K562 (cell line): ENCODE measurements at regions of chr22 and their contacts with region 1.

Region 1: GRCh38 chr22:19479357-19480172 is at the start of gene CDC45:
- DNase-seq: peak; percentile 100
- ATAC-seq: peak; percentile 93
- H3K4me3 ChIP-seq: peak within 1 kb of the TSS; percentile 70
- H3K27ac ChIP-seq: peak within 1 kb of the TSS; percentile 97
- H3K4me1 ChIP-seq: peaks cover 7 to 16% of the 10 kb centered on the region in 2 experiments
- H3K27me3 ChIP-seq: no peaks in the 10 kb centered on the region
- CTCF ChIP-seq: 0 out of 6 replicates have a peak, but pooled peaks of 2 of the 3 experiments have one; percentile 9 to 11
- EP300 ChIP-seq: peak; percentile 35
- POLR2A ChIP-seq: no peak
- RAD21 ChIP-seq: peak in 1 of 2 experiments; percentile 42; a peak in 2 of 4 replicates
- polyA plus RNA-seq, gene CDC45: 276 to 465 TPM

Region 2: GRCh38 chr22:19122143-19122751 is 357.3 kb before region 1 on chr22 and contains the start of gene DGCR2:
- CTCF ChIA-PET with region 1: no interaction called
- POLR2A ChIA-PET with region 1: interaction called, 4 read pairs
- in situ Hi-C with region 1: no loop called
- intact Hi-C with region 1: loop called (anchors 5 kb)
- DNase-seq: peak; percentile 100
- ATAC-seq: peak; percentile 96
- H3K4me3 ChIP-seq: peak within 1 kb of the TSS; percentile 77
- H3K27ac ChIP-seq: peak within 1 kb of the TSS; percentile 77
- H3K4me1 ChIP-seq: peaks cover 30 to 52% of the 10 kb centered on the region in 2 experiments
- H3K27me3 ChIP-seq: peaks cover 18 to 26% of the 10 kb centered on the region in 2 experiments; a peak in 4 of 5 replicates
- CTCF ChIP-seq: no peak; a peak in 1 of 6 replicates
- EP300 ChIP-seq: 0 out of 2 replicates have a peak, but pooled peaks have one; percentile 3
- POLR2A ChIP-seq: peak; percentile 98
- RAD21 ChIP-seq: no peak
- polyA plus RNA-seq, gene DGCR2: 0.69 to 0.70 TPM

Region 3: DNA sequence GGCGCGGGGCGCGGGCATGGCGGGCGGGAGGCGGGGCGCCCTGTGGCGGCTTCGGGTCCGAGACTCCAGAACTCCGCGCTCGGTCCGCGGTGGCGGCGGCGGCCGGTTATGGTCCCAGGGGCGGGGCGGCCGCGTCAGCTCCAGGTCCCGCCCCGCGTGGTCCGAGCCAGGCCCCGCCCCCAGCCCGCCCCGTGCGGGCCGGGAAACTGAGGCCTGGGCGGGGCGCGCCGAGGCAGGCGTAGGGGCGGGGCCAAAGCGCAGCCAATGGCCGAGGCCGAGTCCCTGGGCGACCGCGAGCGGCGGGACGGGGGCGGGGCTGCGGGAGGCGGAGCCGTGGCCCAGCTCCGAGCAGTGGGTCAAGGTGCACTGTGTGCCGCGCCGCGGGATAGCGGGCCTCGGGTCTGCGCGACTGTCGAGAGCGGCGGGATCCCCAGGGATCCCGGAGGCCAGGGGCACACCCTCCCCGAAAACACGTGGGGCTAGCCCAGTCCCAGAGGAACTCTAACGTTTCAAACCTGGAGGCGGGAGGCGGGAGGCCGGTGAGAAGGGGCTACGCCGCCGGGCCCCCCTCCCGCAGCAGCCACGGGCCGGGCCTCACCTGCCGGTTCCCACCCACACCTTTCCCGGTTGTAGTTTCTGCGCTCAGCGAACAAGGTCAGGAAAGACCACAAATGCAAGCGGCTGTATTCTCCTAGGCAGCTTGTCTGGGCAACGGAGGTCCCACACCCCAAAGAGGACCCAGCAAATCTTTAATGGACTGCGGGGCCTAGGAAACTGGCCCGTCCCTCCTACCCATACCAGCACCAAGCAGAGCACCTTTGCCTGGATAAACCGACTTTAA is 300.7 kb before region 1 on chr22 and contains the start of gene SLC25A1:
- CTCF ChIA-PET with region 1: interaction called, 14 read pairs
- POLR2A ChIA-PET with region 1: interaction called, 22 read pairs
- in situ Hi-C with region 1: no loop called
- intact Hi-C with region 1: loop called (anchors 1 kb)
- DNase-seq: peak; percentile 100
- ATAC-seq: peak; percentile 86
- H3K4me3 ChIP-seq: peak within 1 kb of the TSS; percentile 76
- H3K27ac ChIP-seq: peak within 1 kb of the TSS; percentile 85
- H3K4me1 ChIP-seq: peaks cover 31 to 89% of the 10 kb centered on the region in 2 experiments
- H3K27me3 ChIP-seq: peaks cover 10 to 22% of the 10 kb centered on the region in 2 experiments; a peak in 4 of 5 replicates
- CTCF ChIP-seq: no peak
- EP300 ChIP-seq: no peak
- POLR2A ChIP-seq: no peak
- RAD21 ChIP-seq: no peak
- polyA plus RNA-seq, gene SLC25A1: 11.0 to 23.7 TPM

Region 4: DNA sequence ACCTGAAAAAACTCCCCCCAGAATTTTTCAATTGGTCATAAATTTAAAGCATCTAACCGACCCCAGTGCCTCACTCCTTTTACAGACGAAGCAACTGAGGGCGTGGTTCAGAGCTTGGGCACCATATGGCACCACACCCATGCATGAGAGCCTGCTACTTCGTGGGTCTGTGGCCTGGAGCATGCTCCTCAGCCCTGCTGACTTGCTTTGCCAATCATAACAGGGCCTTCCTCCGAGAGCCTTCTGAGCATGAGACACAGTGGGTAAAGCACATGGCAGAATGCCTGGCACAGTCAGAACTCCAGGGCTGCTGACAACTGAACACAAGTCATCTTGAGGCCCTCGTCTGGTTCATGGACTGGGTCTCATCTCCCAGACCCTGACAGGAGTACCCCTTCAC is 81.4 kb before region 1 on chr22:
- CTCF ChIA-PET with region 1: no interaction called
- POLR2A ChIA-PET with region 1: interaction called, 14 read pairs
- in situ Hi-C with region 1: no loop called
- intact Hi-C with region 1: loop called (anchors 5 kb)
- DNase-seq: no peak
- ATAC-seq: no peak
- H3K4me3 ChIP-seq: no peak overlapping the region
- H3K27ac ChIP-seq: peak overlapping the region; percentile 73
- H3K4me1 ChIP-seq: peaks cover 31 to 33% of the 10 kb centered on the region in 2 experiments
- H3K27me3 ChIP-seq: no peaks in the 10 kb centered on the region
- CTCF ChIP-seq: no peak
- EP300 ChIP-seq: no peak
- POLR2A ChIP-seq: no peak
- RAD21 ChIP-seq: no peak; a peak in 1 of 4 replicates

Region 5: DNA sequence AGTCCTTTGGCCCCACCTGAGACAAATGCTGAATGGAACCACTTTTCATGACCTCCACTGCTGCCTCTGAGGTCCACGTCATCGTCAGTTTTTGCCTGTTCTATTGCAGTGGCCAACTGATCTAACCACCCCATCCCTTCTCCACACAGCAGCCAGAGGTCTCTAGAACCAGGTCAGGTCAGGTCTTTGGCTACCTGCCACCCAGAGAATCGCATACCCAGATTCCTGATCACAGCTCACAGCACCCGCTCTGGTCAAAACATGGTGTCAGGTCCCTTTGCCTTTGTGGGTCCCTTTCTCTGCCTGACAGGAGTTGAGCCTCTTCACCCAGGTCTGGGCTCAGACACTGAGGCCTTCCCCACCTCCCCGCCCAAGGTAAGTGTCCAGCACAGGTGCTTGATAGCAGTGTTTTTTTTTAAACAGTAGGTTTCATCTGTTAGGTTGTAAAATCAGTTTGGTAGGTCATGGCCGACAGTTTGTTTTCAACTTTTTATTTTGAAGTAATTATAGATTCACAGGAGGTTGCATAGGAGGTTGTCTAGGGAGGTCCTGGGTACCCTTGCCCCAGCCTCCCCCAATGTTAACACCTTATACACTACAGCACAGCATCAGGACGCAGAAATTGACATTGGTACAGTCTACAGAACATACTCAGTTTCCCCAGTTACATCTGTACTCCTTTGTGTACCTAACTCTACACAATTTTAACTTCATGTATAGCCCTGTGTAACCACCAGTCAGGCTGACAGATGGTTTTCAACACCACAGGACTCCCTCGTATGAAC is 39.0 kb before region 1 on chr22:
- CTCF ChIA-PET with region 1: no interaction called
- POLR2A ChIA-PET with region 1: interaction called, 16 read pairs
- in situ Hi-C with region 1: no loop called
- intact Hi-C with region 1: no loop called
- DNase-seq: peak in 1 of 4 experiments; percentile 49
- ATAC-seq: peak; percentile 7
- H3K4me3 ChIP-seq: no peak overlapping the region
- H3K27ac ChIP-seq: no peak overlapping the region
- H3K4me1 ChIP-seq: peaks cover 7 to 9% of the 10 kb centered on the region in 2 experiments; a peak in 4 of 5 replicates
- H3K27me3 ChIP-seq: no peaks in the 10 kb centered on the region
- CTCF ChIP-seq: no peak
- EP300 ChIP-seq: no peak
- POLR2A ChIP-seq: peak; percentile 34; the same call in 1 of the 2 replicates
- RAD21 ChIP-seq: no peak

Region 6: GRCh38 chr22:19463496-19464469 is 15.8 kb before region 1 on chr22:
- CTCF ChIA-PET with region 1: no interaction called
- POLR2A ChIA-PET with region 1: interaction called, 148 read pairs
- in situ Hi-C with region 1: no loop called
- intact Hi-C with region 1: no loop called
- DNase-seq: peak in 1 of 4 experiments; percentile 50
- ATAC-seq: peak; percentile 21
- H3K4me3 ChIP-seq: no peak overlapping the region
- H3K27ac ChIP-seq: no peak overlapping the region
- H3K4me1 ChIP-seq: no peaks in the 10 kb centered on the region
- H3K27me3 ChIP-seq: no peaks in the 10 kb centered on the region
- CTCF ChIP-seq: no peak
- EP300 ChIP-seq: no peak
- POLR2A ChIP-seq: no peak; the same call in 1 of the 2 replicates
- RAD21 ChIP-seq: 0 out of 4 replicates have a peak, but pooled peaks of 1 of the 2 experiments have one; percentile 13

Region 7: DNA sequence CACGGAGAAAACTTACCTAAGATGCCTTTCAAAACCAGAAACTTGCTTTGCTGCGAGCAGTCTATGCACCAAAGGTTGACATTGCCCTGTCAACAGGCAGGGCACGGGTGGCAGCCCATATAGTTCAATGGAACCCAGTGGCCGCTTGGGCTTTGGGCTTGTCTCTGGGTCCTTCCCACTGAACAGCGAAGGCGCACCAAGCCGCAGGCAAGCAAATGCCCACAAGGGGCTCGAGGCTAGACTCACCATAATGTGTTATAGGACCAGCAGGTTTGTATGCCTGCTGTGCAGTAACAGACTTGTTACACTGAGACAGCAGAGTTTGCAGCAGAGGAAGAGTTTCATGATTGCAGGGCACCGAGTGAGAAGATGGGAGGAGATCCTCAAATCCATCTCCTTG is 24.3 kb after region 1 on chr22:
- CTCF ChIA-PET with region 1: no interaction called
- POLR2A ChIA-PET with region 1: interaction called, 25 read pairs
- in situ Hi-C with region 1: no loop called
- intact Hi-C with region 1: no loop called
- DNase-seq: peak in 2 of 4 experiments; percentile 48 to 52
- ATAC-seq: peak; percentile 50
- H3K4me3 ChIP-seq: no peak overlapping the region
- H3K27ac ChIP-seq: no peak overlapping the region
- H3K4me1 ChIP-seq: peaks cover 0 to 5% of the 10 kb centered on the region in 2 experiments; a peak in 1 of 5 replicates
- H3K27me3 ChIP-seq: no peaks in the 10 kb centered on the region
- CTCF ChIP-seq: peak; percentile 29 to 41 (median 37); a peak in 4 of 6 replicates
- EP300 ChIP-seq: no peak
- POLR2A ChIP-seq: peak; percentile 71
- RAD21 ChIP-seq: 0 out of 4 replicates have a peak, but pooled peaks of 1 of the 2 experiments have one; percentile 4

Region 8: GRCh38 chr22:19942157-19943081 is 462.9 kb after region 1 on chr22:
- CTCF ChIA-PET with region 1: no interaction called
- POLR2A ChIA-PET with region 1: no interaction called
- in situ Hi-C with region 1: no loop called
- intact Hi-C with region 1: no loop called
- DNase-seq: peak; percentile 84 to 93 (median 88)
- ATAC-seq: peak; percentile 54
- H3K4me3 ChIP-seq: peak overlapping the region; percentile 58
- H3K27ac ChIP-seq: peak overlapping the region; percentile 88
- H3K4me1 ChIP-seq: peaks cover 40 to 43% of the 10 kb centered on the region in 2 experiments
- H3K27me3 ChIP-seq: no peaks in the 10 kb centered on the region; a peak in 1 of 5 replicates
- CTCF ChIP-seq: peak in 2 of 3 experiments; percentile 6 to 9; a peak in 2 of 6 replicates
- EP300 ChIP-seq: no peak; the same call in 1 of the 2 replicates
- POLR2A ChIP-seq: no peak
- RAD21 ChIP-seq: no peak; a peak in 2 of 4 replicates

Region 9: DNA sequence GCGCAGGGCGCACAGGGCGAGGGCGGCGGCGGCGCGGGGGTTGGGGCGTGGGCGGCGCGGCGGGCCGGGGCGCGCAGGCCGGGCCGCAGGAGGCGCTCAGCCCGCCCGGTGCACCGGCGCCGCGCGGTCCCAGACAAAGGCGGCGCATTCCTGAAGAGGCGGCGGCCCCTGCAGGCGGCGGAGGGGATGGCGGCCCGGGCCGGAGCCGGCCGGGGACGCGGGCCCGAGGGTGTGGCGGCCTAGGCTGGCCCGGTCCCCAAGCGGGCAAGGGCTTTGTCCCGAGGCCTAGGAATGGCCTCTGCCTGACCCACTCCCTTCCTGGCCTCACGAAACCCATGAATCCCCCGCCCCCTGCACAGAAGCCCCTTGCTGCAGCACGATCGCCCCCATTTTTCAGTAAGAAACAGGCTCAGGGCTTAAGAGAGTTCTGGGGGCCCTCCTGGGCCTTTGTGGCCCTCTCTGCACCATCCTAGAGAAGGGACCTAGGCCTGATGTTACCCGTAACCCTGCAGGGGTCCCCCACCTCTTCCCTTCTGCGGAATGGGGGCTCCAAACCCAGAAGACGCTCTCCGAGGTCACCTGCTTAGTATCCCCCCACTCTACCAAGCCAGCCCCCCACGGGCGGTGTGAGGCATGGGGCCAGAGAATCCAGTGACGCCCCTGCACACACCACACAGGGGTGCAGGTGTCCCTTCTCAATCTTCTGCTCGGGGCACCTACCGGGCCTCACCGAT is 788.9 kb after region 1 on chr22 and contains the start of gene RTN4R:
- CTCF ChIA-PET with region 1: no interaction called
- POLR2A ChIA-PET with region 1: no interaction called
- in situ Hi-C with region 1: no loop called
- intact Hi-C with region 1: no loop called
- DNase-seq: peak; percentile 93 to 99 (median 96)
- ATAC-seq: peak; percentile 90
- H3K4me3 ChIP-seq: peak within 1 kb of the TSS; percentile 48
- H3K27ac ChIP-seq: no peak within 1 kb of the TSS
- H3K4me1 ChIP-seq: peaks cover 4 to 69% of the 10 kb centered on the region in 2 experiments; a peak in 4 of 5 replicates
- H3K27me3 ChIP-seq: peaks cover 19 to 69% of the 10 kb centered on the region in 2 experiments; a peak in 4 of 5 replicates
- CTCF ChIP-seq: peak; percentile 87 to 99 (median 98)
- EP300 ChIP-seq: peak; percentile 52
- POLR2A ChIP-seq: no peak
- RAD21 ChIP-seq: peak; percentile 98 to 99
- polyA plus RNA-seq, gene RTN4R: 0.04 TPM in 1 of 2 experiments, not detected in the other